ENCODE measurements at regions of chr10 and their contacts with region 1.

Region 1: DNA sequence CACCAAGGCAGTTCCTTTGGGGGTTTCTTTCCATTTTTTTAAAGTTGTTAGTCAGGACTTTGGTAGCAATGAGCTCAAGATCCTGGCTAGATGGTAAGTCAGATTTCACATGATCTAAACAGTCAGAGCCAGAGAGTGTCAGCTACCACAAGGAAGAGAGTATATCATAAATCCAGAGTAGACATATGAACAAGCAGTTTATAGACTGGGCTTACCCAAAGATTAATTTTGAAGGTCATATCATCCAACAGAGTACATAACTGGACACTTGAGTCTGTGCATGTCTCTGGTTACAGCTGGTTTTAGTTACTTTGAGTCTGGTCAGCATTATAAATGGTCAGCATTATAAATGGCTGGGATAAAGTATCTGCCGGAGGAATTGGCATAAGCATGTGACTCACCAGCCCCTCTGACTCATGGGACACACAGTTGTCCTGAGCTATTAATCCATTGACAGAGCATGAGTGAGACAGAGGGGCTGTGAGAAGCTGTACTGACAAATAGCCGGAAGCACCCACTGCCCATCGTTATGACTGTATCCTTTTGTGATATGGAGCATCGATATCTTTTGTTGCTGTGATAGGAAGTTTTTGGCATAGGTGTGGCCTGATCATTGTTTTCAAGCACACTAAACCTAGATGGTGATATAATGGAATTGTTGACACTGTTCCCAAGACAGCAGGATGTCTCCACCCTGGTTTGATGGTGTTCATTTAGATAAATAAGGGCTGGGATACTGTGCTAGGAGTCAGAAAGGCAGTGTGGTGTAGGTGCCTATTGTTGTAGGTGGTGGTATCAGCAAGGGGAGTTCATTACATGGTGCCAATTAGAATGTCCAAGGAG is 19.2 kb downstream of the PPP1R3C start:
- DNase-seq: peak; percentile 98
- ATAC-seq: peak; percentile 68
- H3K4me3 ChIP-seq: no peak overlapping the region
- H3K27ac ChIP-seq: peak overlapping the region; percentile 72
- H3K4me1 ChIP-seq: peaks cover 22% of the 10 kb centered on the region
- H3K27me3 ChIP-seq: no peaks in the 10 kb centered on the region
- CTCF ChIP-seq: no peak
- POLR2A ChIP-seq: peak; percentile 34; the same call in 1 of the 2 replicates
- RAD21 ChIP-seq: no peak

Region 2: GRCh38 chr10:91493313-91493712 is 120.3 kb before region 1 on chr10:
- CTCF ChIA-PET with region 1: no interaction called
- POLR2A ChIA-PET with region 1: no interaction called
- dilution Hi-C with region 1: no loop called
- in situ Hi-C with region 1: no loop called
- intact Hi-C with region 1: no loop called
- DNase-seq: peak; percentile 63
- ATAC-seq: no peak
- H3K4me3 ChIP-seq: no peak overlapping the region
- H3K27ac ChIP-seq: no peak overlapping the region
- H3K4me1 ChIP-seq: peaks cover 3% of the 10 kb centered on the region; the same call in 1 of the 2 replicates
- H3K27me3 ChIP-seq: no peaks in the 10 kb centered on the region
- CTCF ChIP-seq: peak; percentile 57
- POLR2A ChIP-seq: no peak
- RAD21 ChIP-seq: peak; percentile 54

Region 3: GRCh38 chr10:91590142-91590903 is 23.3 kb before region 1 on chr10:
- CTCF ChIA-PET with region 1: no interaction called
- POLR2A ChIA-PET with region 1: interaction called, 3 read pairs
- dilution Hi-C with region 1: no loop called
- in situ Hi-C with region 1: no loop called
- intact Hi-C with region 1: loop called (anchors 2 kb)
- DNase-seq: peak; percentile 92
- ATAC-seq: peak; percentile 79
- H3K4me3 ChIP-seq: no peak overlapping the region
- H3K27ac ChIP-seq: peak overlapping the region; percentile 92
- H3K4me1 ChIP-seq: peaks cover 37% of the 10 kb centered on the region
- H3K27me3 ChIP-seq: no peaks in the 10 kb centered on the region
- CTCF ChIP-seq: no peak
- POLR2A ChIP-seq: no peak
- RAD21 ChIP-seq: no peak